Right ventricle myocardium inferior (tissue), 1 donor: ENCODE measurements at regions of chr18 and their contacts with region 1.

Region 1: GRCh38 chr18:79246348-79247108 is 149.2 kb upstream of the NFATC1 start:
- DNase-seq: peak; percentile 79
- ATAC-seq: peak; percentile 98

Region 2: DNA sequence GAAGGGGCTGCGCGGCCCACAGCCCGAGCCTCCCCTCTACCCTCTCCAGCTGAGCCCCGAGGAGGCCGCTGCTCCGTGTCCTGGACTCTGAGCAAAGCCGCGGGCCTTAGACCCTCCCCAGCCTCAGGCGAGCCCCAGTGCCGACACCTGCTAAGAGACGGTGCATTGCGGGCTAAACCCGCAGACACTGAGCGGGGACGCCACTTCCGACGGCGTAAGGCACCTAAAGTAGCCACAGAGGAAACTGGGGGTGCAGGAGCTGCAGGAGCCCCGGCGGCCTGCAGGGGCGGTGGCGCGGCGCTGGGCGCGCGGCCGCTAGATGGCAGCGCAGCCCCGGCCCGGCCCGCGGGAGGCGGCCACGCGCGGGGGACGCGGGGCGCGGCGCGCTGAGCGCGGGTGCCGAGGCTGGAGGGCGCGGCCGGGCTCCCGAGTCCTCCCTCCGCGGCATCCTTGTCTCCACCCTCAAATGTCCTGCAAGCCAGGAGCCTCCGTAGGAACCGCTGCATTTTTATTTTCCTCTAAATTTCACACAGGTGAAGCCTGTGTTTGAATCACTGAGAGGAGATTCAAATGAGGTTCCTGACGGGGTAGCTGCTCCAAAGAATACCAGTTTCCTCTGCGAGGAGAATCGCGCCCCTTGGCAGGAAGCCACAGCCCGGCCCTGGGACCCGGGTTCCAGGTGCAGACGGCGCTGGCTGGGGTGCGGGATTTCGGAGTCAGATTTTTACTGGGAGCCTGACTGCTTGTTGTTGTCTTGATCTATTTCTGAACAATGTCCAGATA is 1346.4 kb before region 1 on chr18:
- intact Hi-C with region 1: loop called (anchors 10 kb)
- DNase-seq: peak; percentile 66
- ATAC-seq: peak; percentile 79

Region 3: DNA sequence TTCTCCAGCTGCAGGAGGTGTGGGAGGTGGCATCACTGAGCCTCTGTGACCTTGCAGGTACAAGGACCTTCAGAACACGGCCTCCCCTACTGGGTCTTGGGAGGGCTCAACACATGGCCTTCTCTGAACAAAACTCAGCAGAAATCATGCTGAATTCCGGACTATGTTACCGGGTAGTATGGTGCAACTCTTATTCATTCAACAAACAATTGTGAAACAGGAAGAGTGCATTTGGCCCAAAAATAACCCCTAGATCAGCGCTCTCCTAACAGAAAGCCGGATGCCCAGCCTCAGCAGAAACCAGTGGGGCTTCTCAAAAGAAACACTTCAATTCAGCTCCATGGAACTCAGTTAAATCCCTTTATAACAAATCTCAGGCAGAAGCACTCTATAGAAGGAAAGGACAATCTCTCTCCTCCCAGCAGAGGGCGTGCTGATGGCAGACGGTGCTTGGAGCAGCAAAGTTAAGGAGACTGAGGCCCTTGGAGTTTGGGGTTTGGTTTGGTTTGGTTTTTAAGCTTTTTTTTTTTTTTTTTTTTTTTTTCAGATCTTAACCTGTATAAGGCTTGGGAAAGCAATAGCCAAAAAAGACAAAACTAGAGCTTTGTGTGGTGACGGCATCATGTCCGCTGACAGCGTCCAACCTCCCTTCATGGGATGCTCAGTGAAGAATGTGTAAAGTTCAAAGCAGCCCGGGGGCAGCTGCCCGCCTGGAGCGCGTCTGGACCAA is 371.1 kb before region 1 on chr18:
- intact Hi-C with region 1: loop called (anchors 5 kb)
- DNase-seq: no peak
- ATAC-seq: no peak

Region 4: GRCh38 chr18:78984941-78985784 is 261.4 kb before region 1 on chr18:
- intact Hi-C with region 1: loop called (anchors 10 kb)
- DNase-seq: no peak
- ATAC-seq: no peak

Region 5: DNA sequence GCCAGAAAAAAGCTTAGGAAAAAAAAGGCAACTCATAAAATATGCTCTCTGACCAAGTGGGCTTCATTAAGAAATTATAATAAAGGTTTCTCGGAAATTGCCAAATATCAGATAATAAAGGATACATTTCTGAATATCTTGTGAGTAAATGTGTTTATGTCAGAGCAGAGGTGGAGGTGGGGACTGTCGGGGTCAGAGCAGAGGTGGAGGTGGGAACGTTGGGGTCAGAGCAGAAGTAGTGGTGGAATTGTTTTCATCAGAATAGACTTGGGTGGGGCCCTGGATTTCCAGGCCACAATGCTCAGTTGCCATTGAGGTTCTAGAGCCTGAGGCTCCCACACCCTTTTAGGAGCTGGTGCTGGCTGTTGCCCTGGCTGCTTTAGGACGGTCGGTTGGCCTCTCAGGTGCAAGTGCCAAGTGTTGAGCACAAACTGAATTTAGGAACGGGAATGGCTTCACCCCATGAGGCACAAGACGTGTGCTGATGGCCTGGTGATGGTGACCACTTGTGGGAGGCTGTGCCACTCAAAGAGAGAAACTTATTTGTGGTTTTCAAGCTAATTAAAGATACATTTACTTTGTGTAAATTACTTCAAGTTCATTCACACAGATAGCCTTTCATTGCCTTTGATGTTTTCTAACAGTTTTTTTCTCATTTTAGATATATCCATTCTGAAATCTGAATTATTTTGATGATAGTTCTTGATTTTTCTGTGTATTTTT is 45.8 kb before region 1 on chr18:
- intact Hi-C with region 1: no loop called
- DNase-seq: no peak
- ATAC-seq: peak; percentile 97